Activated CD4-positive, alpha-beta memory T cell treated with anti-CD3 and anti-CD28 coated beads for 36 hours (primary cell): ENCODE measurements at regions of chr15 and their contacts with region 1.

Region 1: GRCh38 chr15:64809649-64810496 is 15.6 kb downstream of the PIF1 start:
- DNase-seq: peak; percentile 79
- H3K4me3 Mint-ChIP-seq: no peak overlapping the region
- H3K27ac Mint-ChIP-seq: no peak overlapping the region
- H3K4me1 Mint-ChIP-seq: no peaks in the 10 kb centered on the region
- H3K27me3 Mint-ChIP-seq: peaks cover 6% of the 10 kb centered on the region

Region 2: GRCh38 chr15:64767203-64767602 is 42.7 kb before region 1 on chr15:
- CTCF ChIA-PET with region 1: interaction called, 25 read pairs
- POLR2A ChIA-PET with region 1: no interaction called
- intact Hi-C with region 1: no loop called
- DNase-seq: peak; percentile 16
- H3K4me3 Mint-ChIP-seq: no peak overlapping the region
- H3K27ac Mint-ChIP-seq: no peak overlapping the region
- H3K4me1 Mint-ChIP-seq: no peaks in the 10 kb centered on the region
- H3K27me3 Mint-ChIP-seq: no peaks in the 10 kb centered on the region

Region 3: DNA sequence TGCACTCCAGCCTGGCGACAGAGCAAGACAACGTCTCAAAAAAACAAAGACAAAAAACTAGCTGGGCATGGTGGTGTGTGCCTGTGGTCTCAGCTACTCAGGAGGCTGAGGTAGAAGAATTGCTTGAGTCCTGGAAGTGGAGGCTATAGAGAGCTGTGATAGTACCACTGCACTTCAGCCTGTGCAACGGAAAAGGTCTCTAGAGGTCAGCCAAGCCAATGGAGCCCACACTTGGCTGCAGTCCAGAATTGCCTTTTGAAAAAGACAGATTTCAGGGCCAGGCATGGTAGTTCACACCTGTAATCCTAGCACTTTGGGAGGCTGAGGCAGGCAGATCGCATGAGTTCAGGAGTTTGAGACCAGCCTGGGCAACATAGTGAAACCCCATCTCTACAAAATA is 26.1 kb before region 1 on chr15:
- CTCF ChIA-PET with region 1: interaction called, 12 read pairs
- POLR2A ChIA-PET with region 1: no interaction called
- intact Hi-C with region 1: no loop called
- DNase-seq: no peak
- H3K4me3 Mint-ChIP-seq: no peak overlapping the region
- H3K27ac Mint-ChIP-seq: no peak overlapping the region
- H3K4me1 Mint-ChIP-seq: peaks cover 6% of the 10 kb centered on the region
- H3K27me3 Mint-ChIP-seq: peaks cover 1% of the 10 kb centered on the region

Region 4: GRCh38 chr15:64825431-64826294 is 15.8 kb after region 1 on chr15 and contains the start of gene PIF1:
- CTCF ChIA-PET with region 1: interaction called, 49 read pairs
- POLR2A ChIA-PET with region 1: no interaction called
- intact Hi-C with region 1: no loop called
- DNase-seq: peak; percentile 93
- H3K4me3 Mint-ChIP-seq: peak within 1 kb of the TSS; percentile 82
- H3K27ac Mint-ChIP-seq: peak within 1 kb of the TSS; percentile 56
- H3K4me1 Mint-ChIP-seq: peaks cover 24% of the 10 kb centered on the region
- H3K27me3 Mint-ChIP-seq: peaks cover 4% of the 10 kb centered on the region
- total RNA-seq, gene PIF1: 23.6 to 30.2 TPM

Region 5: DNA sequence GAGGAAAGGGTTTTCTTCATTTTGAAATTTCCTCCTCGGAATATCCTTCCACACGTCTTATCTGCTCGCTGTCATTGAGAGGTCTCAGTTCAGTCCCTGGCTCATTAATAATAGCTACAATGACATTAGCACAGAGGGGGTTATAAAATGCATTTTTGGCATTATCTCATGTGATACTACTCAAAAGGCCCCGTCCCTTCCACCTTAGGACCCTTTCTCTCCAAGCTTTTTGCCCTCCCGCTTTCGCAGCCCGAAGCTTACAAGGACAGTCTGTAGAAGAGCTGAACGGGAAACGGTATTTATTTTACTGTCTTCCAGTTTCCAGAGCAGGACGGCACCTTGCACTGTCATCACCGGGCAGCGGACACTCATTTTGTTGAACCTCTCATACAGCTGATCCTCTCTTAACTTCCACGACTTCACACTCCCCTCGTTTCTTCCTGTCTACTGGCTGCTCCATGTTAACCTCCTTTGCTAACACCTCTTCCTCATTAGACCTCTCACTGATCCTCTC is 26.2 kb after region 1 on chr15:
- CTCF ChIA-PET with region 1: interaction called, 23 read pairs
- POLR2A ChIA-PET with region 1: no interaction called
- intact Hi-C with region 1: no loop called
- DNase-seq: no peak
- H3K4me3 Mint-ChIP-seq: peak overlapping the region; percentile 59
- H3K27ac Mint-ChIP-seq: peak overlapping the region; percentile 59
- H3K4me1 Mint-ChIP-seq: peaks cover 40% of the 10 kb centered on the region
- H3K27me3 Mint-ChIP-seq: no peaks in the 10 kb centered on the region

Region 6: GRCh38 chr15:64905119-64905831 is 95.4 kb after region 1 on chr15:
- CTCF ChIA-PET with region 1: interaction called, 10 read pairs
- POLR2A ChIA-PET with region 1: no interaction called
- intact Hi-C with region 1: no loop called
- DNase-seq: peak; percentile 88
- H3K4me3 Mint-ChIP-seq: peak overlapping the region; percentile 72
- H3K27ac Mint-ChIP-seq: peak overlapping the region; percentile 39
- H3K4me1 Mint-ChIP-seq: peaks cover 34% of the 10 kb centered on the region
- H3K27me3 Mint-ChIP-seq: no peaks in the 10 kb centered on the region